ENCODE measurements at regions of chr12 and their contacts with region 1.

Region 1: GRCh38 chr12:114403011-114403689 is 2.8 kb downstream of the TBX5 start:
- DNase-seq: no peak
- H3K4me3 ChIP-seq: no peak overlapping the region
- H3K27ac ChIP-seq: peak overlapping the region in 1 of 2 donors; percentile 19
- H3K4me1 ChIP-seq: no peaks in the 10 kb centered on the region
- H3K27me3 ChIP-seq: peaks cover 44% of the 10 kb centered on the region
- CTCF ChIP-seq: no peak
- POLR2A ChIP-seq: no peak

Region 2: GRCh38 chr12:113973109-113973904 is 429.8 kb before region 1 on chr12:
- intact Hi-C with region 1: no loop called
- DNase-seq: no peak
- H3K4me3 ChIP-seq: no peak overlapping the region
- H3K27ac ChIP-seq: no peak overlapping the region
- H3K4me1 ChIP-seq: no peaks in the 10 kb centered on the region
- H3K27me3 ChIP-seq: no peaks in the 10 kb centered on the region
- CTCF ChIP-seq: no peak
- POLR2A ChIP-seq: no peak

Region 3: DNA sequence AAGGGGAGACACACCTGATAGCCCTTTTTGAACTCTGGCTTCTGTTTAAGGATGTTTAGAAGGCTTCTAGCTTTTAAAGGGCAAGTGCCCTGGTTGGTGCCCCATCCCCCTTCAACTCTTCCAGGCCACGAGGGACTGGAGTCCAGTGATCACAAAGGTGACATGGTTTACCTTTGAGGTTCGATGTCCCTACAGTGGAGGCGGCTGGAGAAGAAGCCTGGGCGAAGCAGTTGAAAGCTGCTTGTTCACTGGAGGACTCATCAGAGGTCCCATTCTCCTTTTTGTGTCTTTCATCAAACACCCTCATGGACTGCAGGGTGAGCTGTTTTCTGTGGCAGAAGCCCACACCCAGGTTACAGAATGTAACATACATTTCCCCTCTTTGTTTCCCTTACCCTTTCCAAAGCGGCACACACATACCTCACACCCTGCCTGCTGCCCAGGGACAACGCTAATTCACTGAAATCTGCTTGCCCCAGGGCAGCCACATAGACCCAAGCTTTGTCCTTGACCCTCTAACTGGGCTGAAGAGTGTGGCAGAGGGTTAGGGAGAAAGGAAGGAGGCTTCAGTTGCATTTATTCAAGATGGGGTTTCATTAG is 273.1 kb after region 1 on chr12:
- intact Hi-C with region 1: loop called (anchors 2 kb)
- DNase-seq: no peak
- H3K4me3 ChIP-seq: peak overlapping the region; percentile 89 to 94
- H3K27ac ChIP-seq: peak overlapping the region; percentile 88 to 98
- H3K4me1 ChIP-seq: peaks cover 6% of the 10 kb centered on the region
- H3K27me3 ChIP-seq: no peaks in the 10 kb centered on the region
- CTCF ChIP-seq: no peak
- POLR2A ChIP-seq: no peak

Measured in prostate gland (tissue), 2 donors.